K562 (cell line): ENCODE measurements at regions of chr17 and their contacts with region 1.

Region 1: DNA sequence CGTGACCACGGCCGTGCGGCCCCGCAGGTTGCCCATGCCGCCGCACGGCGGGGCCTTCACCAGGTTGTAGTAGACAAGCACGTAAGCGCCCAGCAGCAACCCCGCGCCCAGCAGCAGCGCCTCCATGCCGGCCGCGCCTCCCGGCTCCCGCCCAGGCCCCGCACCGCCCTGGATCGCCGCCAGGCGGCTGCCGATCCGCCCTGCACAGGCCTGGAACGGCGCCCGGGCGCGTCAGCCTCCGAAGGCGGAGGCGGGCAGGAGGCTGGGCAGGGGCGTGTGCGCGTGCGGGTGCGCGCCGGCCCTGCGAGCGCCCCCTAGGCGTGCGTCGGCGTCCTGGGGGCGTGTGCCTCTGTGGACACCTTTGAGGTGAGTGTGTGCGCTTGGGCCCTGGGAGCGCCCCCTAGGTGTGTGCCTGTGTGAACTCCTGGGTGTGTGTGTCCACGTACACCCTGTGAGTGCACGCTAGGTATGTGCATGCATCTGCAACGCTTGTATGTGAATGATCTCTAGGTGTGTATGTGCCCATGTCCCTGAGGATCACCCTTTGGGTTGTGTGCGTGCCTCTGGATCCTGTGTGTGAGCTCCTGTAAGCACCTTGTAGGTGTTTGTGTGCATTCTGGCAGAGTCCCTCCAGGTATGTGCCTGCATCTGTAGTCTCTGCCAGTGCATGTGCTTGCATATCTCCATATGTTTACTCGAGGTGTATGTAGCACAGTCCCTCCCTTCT is at the start of gene DHRS13:
- DNase-seq: peak; percentile 95 to 98 (median 96)
- ATAC-seq: peak; percentile 88
- H3K4me3 ChIP-seq: peak within 1 kb of the TSS; percentile 81
- H3K27ac ChIP-seq: peak within 1 kb of the TSS; percentile 85
- H3K4me1 ChIP-seq: peaks cover 69 to 72% of the 10 kb centered on the region in 2 experiments; a peak in 4 of 5 replicates
- H3K27me3 ChIP-seq: no peaks in the 10 kb centered on the region
- CTCF ChIP-seq: peak; percentile 99
- EP300 ChIP-seq: peak; percentile 72
- POLR2A ChIP-seq: peak; percentile 20; the same call in 1 of the 2 replicates
- RAD21 ChIP-seq: peak; percentile 80 to 87
- polyA plus RNA-seq, gene DHRS13: 0.32 TPM in 1 of 2 experiments, not detected in the other

Region 2: GRCh38 chr17:28864991-28865849 is 37.8 kb before region 1 on chr17:
- CTCF ChIA-PET with region 1: no interaction called
- POLR2A ChIA-PET with region 1: interaction called, 6 read pairs
- in situ Hi-C with region 1: no loop called
- intact Hi-C with region 1: loop called (anchors 5 kb)
- DNase-seq: peak; percentile 97 to 99 (median 98)
- ATAC-seq: peak; percentile 80
- H3K4me3 ChIP-seq: no peak overlapping the region; the same call in 1 of the 2 replicates
- H3K27ac ChIP-seq: peak overlapping the region; percentile 94
- H3K4me1 ChIP-seq: peaks cover 68 to 69% of the 10 kb centered on the region in 2 experiments
- H3K27me3 ChIP-seq: no peaks in the 10 kb centered on the region
- CTCF ChIP-seq: no peak
- EP300 ChIP-seq: peak; percentile 100
- POLR2A ChIP-seq: peak; percentile 21; the same call in 1 of the 2 replicates
- RAD21 ChIP-seq: peak in 1 of 2 experiments; percentile 25; a peak in 3 of 4 replicates

Region 3: DNA sequence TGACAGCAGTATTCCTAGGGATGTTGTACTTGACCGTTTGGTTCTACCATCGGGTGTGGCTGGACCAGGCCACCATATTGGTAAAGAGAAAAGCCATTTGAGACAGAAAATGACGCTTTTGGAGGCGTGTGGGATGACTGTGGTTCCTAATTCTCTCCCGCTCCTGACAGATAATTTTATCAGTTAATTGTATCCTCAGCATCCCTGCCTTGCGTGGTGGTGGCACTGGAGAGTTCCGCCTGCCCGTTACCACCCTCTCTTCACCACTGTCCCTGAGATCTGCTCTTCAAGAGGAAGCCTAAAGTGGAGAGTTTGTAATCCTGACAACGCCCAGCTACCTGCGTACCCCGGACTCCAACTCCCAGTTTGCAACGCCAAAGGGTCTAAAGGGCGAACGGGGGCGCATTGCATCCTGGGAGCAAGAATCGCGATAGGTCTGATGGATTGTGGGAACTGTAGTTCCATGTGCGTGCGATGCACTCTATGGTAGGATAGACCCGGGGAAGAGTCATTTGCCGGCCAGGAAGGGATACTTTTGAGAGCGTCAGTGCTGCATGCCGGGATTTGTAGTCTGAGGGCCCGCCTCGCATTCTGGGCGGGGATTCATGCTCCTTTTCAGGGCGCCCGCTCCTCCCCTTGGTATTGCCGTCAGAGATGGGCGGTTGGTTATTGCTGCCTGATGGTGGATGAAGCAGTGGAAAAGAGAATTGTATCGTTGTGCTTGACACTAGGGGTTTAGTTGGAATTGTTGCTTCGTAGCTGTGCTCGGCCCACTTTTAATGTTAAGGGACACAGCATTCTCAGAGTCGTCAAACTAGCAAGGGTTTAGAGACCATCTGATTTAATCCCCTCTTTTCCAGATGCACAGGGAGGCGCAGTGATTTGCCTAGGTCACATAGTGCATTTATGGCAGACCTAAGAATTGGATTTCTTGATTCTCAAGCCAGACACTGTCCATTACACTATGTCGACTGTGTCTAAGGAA is 49.3 kb after region 1 on chr17:
- CTCF ChIA-PET with region 1: interaction called, 4 read pairs
- POLR2A ChIA-PET with region 1: interaction called, 5 read pairs
- in situ Hi-C with region 1: no loop called
- intact Hi-C with region 1: loop called (anchors 5 kb)
- DNase-seq: peak; percentile 89 to 99 (median 92)
- ATAC-seq: peak; percentile 83
- H3K4me3 ChIP-seq: peak overlapping the region; percentile 59
- H3K27ac ChIP-seq: peak overlapping the region; percentile 100
- H3K4me1 ChIP-seq: peaks cover 15 to 18% of the 10 kb centered on the region in 2 experiments
- H3K27me3 ChIP-seq: peaks cover 0 to 7% of the 10 kb centered on the region in 2 experiments; a peak in 2 of 5 replicates
- CTCF ChIP-seq: peak in 1 of 3 experiments; percentile 20; a peak in 1 of 6 replicates
- EP300 ChIP-seq: no peak; the same call in 1 of the 2 replicates
- POLR2A ChIP-seq: peak; percentile 86
- RAD21 ChIP-seq: no peak